K562 (cell line): ENCODE measurements at regions of chr1 and their contacts with region 1.

Region 1: GRCh38 chr1:8789314-8790214 is 27.9 kb downstream of the RERE start:
- DNase-seq: peak; percentile 82 to 96 (median 88)
- ATAC-seq: peak; percentile 84
- H3K4me3 ChIP-seq: peak overlapping the region; percentile 14; the same call in 1 of the 2 replicates
- H3K27ac ChIP-seq: peak overlapping the region; percentile 98
- H3K4me1 ChIP-seq: peaks cover 34 to 50% of the 10 kb centered on the region in 2 experiments
- H3K27me3 ChIP-seq: no peaks in the 10 kb centered on the region
- CTCF ChIP-seq: no peak
- EP300 ChIP-seq: peak; percentile 96
- POLR2A ChIP-seq: peak; percentile 81
- RAD21 ChIP-seq: no peak

Region 2: DNA sequence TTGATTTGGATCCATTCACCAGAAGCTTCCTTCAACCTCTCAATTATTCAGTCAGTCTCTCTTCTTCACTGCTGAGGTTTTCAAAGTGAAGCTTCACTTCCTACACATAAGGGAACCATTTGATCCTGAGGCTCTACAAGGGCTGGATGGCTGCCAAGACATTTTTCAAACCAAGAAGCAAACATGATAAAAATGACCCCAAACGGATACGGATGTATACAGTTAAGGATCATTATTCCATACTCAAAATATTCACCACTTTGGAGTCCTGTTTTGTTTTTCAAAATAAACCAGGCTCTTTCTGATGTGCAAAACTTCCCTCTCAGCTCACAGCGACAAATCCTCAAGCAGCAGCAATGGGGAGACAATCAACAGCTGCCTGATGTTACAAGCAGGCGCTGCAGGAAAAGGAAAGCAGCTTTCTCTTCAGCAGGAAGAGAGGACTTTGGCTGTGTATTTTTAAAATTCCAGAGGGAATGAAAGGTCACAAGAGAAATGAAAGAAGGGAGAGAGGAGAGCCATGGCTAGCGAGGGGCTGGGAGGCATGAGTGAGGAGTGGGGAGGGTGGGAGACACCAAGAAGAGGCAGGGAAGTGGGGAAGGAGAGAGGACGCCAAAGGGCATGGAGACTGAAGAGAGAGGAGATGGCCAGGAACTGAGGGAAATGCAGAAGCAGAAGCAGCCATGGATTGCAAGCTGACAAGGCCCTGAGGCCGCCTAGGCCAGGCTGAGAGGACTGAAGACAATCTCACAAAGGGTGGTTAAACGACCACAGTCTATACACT is 326.2 kb before region 1 on chr1:
- CTCF ChIA-PET with region 1: no interaction called
- POLR2A ChIA-PET with region 1: no interaction called
- in situ Hi-C with region 1: no loop called
- intact Hi-C with region 1: no loop called
- DNase-seq: peak in 1 of 4 experiments; percentile 47
- ATAC-seq: peak; percentile 53
- H3K4me3 ChIP-seq: no peak overlapping the region
- H3K27ac ChIP-seq: no peak overlapping the region; the same call in 2 of the 3 replicates
- H3K4me1 ChIP-seq: peaks cover 6 to 15% of the 10 kb centered on the region in 2 experiments; a peak in 4 of 5 replicates
- H3K27me3 ChIP-seq: no peaks in the 10 kb centered on the region
- CTCF ChIP-seq: no peak
- EP300 ChIP-seq: no peak
- POLR2A ChIP-seq: no peak
- RAD21 ChIP-seq: no peak

Region 3: GRCh38 chr1:8776104-8776503 is 13.5 kb before region 1 on chr1:
- CTCF ChIA-PET with region 1: no interaction called
- POLR2A ChIA-PET with region 1: interaction called, 10 read pairs
- in situ Hi-C with region 1: no loop called
- intact Hi-C with region 1: no loop called
- DNase-seq: no peak
- ATAC-seq: peak; percentile 64
- H3K4me3 ChIP-seq: no peak overlapping the region
- H3K27ac ChIP-seq: no peak overlapping the region
- H3K4me1 ChIP-seq: peaks cover 0 to 8% of the 10 kb centered on the region in 2 experiments; a peak in 2 of 5 replicates
- H3K27me3 ChIP-seq: no peaks in the 10 kb centered on the region
- CTCF ChIP-seq: peak in 2 of 3 experiments; percentile 16 to 31; a peak in 2 of 6 replicates
- EP300 ChIP-seq: no peak
- POLR2A ChIP-seq: no peak
- RAD21 ChIP-seq: peak in 1 of 2 experiments; percentile 25; a peak in 2 of 4 replicates

Region 4: DNA sequence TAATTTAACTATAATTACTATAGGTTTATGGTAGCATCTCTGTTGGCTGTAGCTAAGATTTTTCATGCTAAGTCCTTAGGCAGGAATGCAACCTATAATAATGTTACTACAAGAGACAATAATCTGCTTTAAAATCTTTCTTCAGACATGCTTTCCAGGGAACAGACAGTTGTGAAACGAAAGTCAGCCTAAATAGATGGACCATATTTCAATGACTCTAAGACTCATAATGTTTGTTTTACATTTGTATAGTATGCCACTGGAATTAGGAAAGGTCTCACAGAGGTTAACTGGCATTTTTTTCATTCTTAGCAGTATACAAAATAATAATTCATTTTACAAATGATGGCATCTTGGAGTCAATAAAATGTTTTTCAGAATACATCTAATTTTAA is 19.8 kb after region 1 on chr1:
- CTCF ChIA-PET with region 1: no interaction called
- POLR2A ChIA-PET with region 1: interaction called, 11 read pairs
- in situ Hi-C with region 1: no loop called
- intact Hi-C with region 1: no loop called
- DNase-seq: no peak
- ATAC-seq: no peak
- H3K4me3 ChIP-seq: no peak overlapping the region
- H3K27ac ChIP-seq: no peak overlapping the region
- H3K4me1 ChIP-seq: peaks cover 0 to 10% of the 10 kb centered on the region in 2 experiments; a peak in 4 of 5 replicates
- H3K27me3 ChIP-seq: no peaks in the 10 kb centered on the region
- CTCF ChIP-seq: no peak
- EP300 ChIP-seq: no peak
- POLR2A ChIP-seq: no peak
- RAD21 ChIP-seq: no peak